A549 (cell line): ENCODE measurements at regions of chr15 and their contacts with region 1.

Region 1: DNA sequence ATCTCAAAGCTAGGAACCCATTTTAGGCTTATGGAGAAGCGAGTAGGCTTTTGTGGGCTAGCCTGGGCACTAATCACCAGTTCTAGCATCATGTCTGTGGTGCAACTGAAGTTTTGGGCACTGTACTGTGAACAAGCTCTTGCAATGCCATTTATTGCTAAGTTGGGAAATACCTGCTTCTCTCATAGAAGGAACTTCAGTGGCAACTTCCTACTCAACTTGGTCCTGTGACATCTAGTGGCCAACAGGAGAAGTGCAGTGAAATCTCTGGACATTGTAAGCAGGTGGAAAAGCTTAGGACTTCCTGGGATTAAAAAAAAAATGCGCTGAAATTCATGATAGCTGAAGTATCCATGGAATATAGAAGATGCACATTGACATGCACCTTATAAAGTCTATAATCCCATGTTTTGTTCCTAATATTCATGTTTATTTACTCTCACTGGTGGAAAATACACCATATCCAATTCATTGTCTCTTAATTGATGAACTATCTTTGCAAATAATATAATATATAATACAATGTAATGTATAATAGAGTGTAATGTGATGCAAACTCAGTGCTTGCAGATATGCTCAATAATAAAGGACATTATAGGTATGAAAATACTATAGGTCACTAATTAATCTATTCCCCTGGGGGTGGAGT is 6.5 kb upstream of the ALDH1A3 start:
- DNase-seq: peak; percentile 88 to 91
- ATAC-seq: peak; percentile 72 to 87
- H3K4me3 ChIP-seq: no peak overlapping the region
- H3K27ac ChIP-seq: no peak overlapping the region
- H3K4me1 ChIP-seq: no peaks in the 10 kb centered on the region
- CTCF ChIP-seq: peak; percentile 91
- EP300 ChIP-seq: no peak
- POLR2A ChIP-seq: no peak
- RAD21 ChIP-seq: peak; percentile 80 to 89

Region 2: DNA sequence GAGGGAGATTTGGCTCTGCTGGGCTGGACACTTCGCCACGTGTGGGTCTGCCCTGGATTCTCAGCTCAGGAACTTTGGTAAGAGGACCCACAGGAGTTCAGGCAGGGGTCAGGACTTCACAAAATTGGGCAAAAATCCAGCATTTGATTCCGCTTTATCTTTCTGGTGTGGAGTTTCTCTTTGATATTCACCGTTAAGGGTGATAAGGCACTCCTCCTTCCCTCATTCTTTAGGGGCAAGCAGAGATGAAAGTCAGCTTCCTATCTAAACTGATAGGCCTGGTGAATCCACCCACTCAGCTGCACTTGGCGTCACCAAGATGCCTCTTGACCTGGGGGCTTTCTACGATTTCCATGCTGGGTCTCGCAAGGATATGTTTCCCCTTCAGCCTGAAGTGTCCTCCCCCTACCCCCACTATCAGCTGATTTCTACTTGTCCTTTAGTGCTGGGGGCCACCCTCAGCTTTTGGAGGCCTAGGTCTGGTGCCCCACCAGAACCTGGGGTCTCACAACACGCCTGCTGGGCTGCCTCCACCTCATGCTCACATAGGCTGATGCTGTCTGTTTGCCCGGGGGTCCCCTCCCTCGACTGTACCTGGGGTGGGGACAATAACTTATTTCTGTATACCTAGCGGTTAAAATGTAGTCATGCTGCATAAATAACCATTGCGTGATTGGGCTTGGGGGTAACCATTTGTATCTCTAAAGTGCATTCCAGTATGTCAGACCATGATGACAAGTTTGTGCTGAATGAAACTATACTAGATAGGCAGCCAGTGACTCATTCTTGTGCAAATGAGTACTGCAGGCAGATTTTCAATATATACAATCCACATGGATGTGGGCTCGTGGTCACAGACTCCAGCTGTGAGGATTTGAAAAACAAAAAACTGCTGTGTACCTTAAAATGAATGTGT is 779.7 kb before region 1 on chr15:
- CTCF ChIA-PET with region 1: no interaction called
- POLR2A ChIA-PET with region 1: no interaction called
- DNase-seq: no peak
- ATAC-seq: no peak
- H3K4me3 ChIP-seq: no peak overlapping the region
- H3K27ac ChIP-seq: no peak overlapping the region
- H3K4me1 ChIP-seq: no peaks in the 10 kb centered on the region
- CTCF ChIP-seq: no peak
- EP300 ChIP-seq: no peak
- POLR2A ChIP-seq: no peak
- RAD21 ChIP-seq: no peak

Region 3: DNA sequence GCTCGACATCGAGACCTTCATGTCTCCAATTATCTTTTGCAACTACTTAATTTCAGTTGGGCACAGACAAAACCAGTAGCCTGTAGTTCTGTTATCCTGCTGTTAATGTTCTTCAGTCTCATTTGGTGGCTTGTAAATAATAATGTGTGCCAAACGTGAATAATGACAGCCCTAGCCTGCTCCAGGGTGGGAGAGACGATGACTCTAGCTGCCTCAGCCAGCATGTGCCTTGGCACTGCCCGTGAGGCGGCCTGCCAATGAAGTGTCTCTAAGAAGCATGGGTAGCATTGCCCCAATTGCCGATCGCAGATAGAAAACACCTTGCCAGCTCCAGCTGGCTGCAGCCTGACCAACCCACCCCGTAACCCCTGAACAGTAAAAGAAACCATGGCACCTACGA is 212.0 kb before region 1 on chr15:
- CTCF ChIA-PET with region 1: interaction called, 16 read pairs
- POLR2A ChIA-PET with region 1: no interaction called
- DNase-seq: no peak
- ATAC-seq: no peak
- H3K4me3 ChIP-seq: no peak overlapping the region
- H3K27ac ChIP-seq: no peak overlapping the region
- H3K4me1 ChIP-seq: no peaks in the 10 kb centered on the region
- CTCF ChIP-seq: no peak
- EP300 ChIP-seq: no peak
- POLR2A ChIP-seq: no peak
- RAD21 ChIP-seq: no peak

Region 4: GRCh38 chr15:100721770-100722550 is 151.2 kb before region 1 on chr15:
- CTCF ChIA-PET with region 1: interaction called, 21 read pairs
- POLR2A ChIA-PET with region 1: interaction called, 7 read pairs
- DNase-seq: peak; percentile 98
- ATAC-seq: peak; percentile 80 to 90
- H3K4me3 ChIP-seq: peak overlapping the region; percentile 19; the same call in 2 of the 3 replicates
- H3K27ac ChIP-seq: peak overlapping the region; percentile 80 to 81
- H3K4me1 ChIP-seq: peaks cover 43% of the 10 kb centered on the region
- CTCF ChIP-seq: no peak
- EP300 ChIP-seq: peak; percentile 63 to 80; a peak in 2 of 5 replicates
- POLR2A ChIP-seq: no peak
- RAD21 ChIP-seq: peak in 1 of 2 experiments; percentile 35; a peak in 2 of 5 replicates

Region 5: DNA sequence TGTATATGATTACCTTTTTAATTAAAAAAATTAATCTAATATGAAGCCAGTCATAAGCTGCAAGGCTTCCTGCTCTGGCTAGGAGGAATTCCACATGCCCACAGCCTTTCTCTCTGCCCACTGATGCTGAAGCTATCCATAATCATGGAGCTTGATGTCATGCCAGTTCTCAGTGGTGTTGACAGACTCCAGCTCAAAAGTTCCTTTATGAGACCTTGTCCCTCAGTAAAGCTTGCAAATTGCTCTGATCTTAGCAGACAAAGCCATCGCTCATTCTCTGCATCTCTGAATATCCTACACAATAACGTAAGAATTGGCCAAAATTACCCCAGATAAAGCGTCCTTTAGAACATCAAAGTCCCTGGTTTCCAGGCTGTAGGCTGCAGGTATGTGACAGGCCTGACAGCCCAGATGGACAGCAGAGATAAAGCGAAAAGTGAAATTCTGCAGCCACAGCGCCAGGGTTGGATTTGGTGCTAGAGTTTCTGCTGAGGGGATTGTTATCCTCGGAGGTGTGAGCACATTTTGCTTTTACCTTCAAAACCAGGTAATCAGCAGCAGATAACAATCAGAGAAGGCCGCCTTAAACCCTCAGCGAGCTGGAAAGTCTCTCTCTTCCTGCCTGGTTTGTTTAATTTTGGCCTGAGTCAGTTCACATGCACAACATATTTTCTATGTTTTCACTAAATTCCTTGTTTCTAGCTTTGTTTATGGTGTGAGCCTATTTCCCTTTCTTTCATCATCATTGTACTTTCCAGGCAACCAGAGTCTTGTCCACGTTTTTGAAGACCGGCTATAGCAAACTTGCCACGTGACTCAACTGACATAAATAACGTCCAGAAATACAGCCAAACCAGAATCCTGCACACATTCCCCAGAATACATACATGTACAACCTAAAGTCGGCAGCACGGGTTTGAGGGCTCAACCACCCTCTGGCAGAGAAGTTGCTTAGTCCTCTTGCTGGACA is 30.1 kb before region 1 on chr15:
- CTCF ChIA-PET with region 1: interaction called, 15 read pairs
- POLR2A ChIA-PET with region 1: no interaction called
- DNase-seq: no peak
- ATAC-seq: peak in 1 of 2 experiments; percentile 40; a peak in 1 of 6 replicates
- H3K4me3 ChIP-seq: no peak overlapping the region
- H3K27ac ChIP-seq: no peak overlapping the region; a peak in 1 of 6 replicates
- H3K4me1 ChIP-seq: peaks cover 6% of the 10 kb centered on the region; the same call in 1 of the 3 replicates
- CTCF ChIP-seq: no peak
- EP300 ChIP-seq: no peak
- POLR2A ChIP-seq: no peak
- RAD21 ChIP-seq: no peak

Region 6: DNA sequence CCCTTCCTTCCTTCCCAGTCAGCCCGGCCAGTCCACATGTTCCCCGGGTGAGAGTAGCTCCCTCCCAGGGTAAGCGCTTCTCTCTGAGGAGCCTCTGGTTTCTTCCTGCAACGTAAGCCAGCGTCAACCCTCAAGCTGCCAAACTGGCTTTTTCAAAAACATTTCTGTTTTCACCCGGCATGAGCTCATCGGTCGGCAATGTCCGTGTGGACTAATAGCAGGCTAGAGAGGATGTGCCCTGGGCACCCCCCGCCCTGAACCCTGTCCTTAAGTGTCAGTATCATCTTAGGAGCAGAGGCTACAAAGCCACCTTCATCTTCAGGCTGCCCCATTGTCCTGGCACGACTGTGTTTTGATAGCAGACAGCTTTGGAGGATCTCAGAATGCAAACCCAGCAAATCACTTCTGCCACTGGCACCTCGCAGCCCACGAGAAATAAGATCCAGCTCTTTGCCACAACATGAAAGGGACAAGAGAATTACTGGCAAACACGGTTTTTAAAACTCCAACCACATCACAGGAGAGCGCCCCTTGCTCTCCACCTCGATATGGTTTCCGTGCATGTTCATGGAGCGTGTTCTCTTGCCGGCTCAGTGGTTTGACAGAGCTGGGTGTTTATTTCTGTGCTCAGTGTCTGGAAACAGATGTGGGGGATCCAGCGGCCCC is 16.4 kb after region 1 on chr15:
- CTCF ChIA-PET with region 1: interaction called, 30 read pairs
- POLR2A ChIA-PET with region 1: no interaction called
- DNase-seq: no peak
- ATAC-seq: no peak; a peak in 1 of 6 replicates
- H3K4me3 ChIP-seq: no peak overlapping the region
- H3K27ac ChIP-seq: no peak overlapping the region
- H3K4me1 ChIP-seq: no peaks in the 10 kb centered on the region
- CTCF ChIP-seq: no peak
- EP300 ChIP-seq: no peak
- POLR2A ChIP-seq: no peak
- RAD21 ChIP-seq: no peak